ENCODE measurements at regions of chr2 and their contacts with region 1.

Region 1: DNA sequence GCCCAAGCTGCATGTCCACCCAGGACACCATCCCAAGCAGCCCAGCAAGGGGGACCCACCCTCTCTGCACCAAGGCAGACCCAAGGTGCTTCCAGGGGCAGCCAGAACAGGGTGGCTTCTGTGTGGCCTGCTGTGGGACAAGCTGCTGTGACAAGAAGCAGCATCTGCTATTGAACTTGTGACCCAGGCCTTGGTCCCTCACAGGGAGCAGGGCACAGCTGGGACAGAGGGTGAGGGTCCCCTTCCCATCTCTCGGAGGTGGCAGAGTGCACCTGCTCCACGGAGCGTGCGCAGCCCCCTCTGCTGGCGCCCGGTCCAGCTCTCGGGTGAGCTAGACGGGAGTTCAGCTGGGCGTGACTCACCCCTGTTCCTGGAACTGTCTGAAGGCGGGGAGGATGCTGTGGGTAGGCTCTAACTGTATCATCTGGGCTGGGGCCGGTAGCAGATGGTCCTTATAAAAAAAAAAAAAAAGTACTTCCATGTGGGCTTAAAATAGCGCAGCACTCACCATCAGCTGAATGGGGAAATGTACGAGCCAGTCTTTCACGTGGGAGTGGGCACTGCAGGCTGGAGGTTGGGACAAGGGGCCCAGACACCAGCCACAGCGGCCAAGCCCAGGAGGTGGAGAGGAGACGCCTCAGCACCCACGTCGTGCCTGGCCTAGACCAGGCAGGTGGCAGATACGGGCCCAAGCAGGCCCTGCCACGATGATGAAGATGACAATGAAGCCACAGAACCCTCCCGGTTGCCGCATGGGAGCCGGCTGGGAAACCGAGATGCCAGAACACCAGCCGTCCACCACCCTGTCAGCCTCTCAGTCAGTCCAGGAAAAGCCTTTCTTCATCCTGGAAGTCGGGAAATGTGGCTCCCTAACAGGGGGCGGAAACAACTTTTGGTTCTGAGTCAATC is 136.8 kb upstream of the ID2 start:
- DNase-seq: peak; percentile 40 to 92 (median 72)
- ATAC-seq: peak; percentile 87
- H3K4me3 ChIP-seq: no peak overlapping the region
- H3K4me3 Mint-ChIP-seq: peak overlapping the region; percentile 35
- H3K27ac ChIP-seq: peak overlapping the region in 1 of 2 donors; percentile 59
- H3K27ac Mint-ChIP-seq: peak overlapping the region; percentile 66
- H3K4me1 ChIP-seq: peaks cover 71% of the 10 kb centered on the region
- H3K4me1 Mint-ChIP-seq: peaks cover 48% of the 10 kb centered on the region
- H3K27me3 ChIP-seq: no peaks in the 10 kb centered on the region
- H3K27me3 Mint-ChIP-seq: no peaks in the 10 kb centered on the region
- CTCF ChIP-seq: peak; percentile 41

Region 2: DNA sequence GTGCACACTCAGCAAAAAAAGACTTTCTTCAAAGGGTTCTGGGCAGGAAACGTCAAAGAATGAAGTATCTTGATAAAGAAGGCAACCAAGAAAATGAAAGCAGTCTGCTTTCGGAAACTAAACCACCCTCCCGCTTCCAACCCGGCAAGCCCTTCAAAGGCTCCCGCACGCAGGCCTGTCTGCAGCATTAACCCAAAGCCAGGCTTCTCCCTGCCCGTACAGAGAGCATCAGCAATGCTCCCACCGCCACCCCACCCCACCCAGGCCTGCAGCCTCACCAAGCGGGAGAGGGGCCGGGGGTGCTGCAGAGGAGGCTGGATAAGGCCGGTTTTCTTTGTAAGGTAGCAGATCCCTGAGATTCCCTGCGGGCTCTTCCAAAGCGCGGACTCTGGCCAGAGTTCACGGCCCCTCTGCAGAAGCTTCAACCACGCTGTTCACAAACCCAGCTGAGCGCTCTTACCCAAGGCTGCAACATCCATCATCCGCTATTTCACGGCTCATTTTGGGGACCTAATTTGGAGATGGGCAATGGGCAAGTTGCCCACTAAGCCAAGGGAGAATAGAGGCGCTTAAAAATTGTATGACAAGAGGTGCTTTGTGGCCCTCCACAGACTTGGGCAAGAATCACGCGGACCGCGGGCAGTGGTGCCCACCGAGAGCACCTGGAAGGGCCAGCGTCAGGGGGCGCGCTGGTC is 88.7 kb before region 1 on chr2:
- CTCF ChIA-PET with region 1: no interaction called
- POLR2A ChIA-PET with region 1: no interaction called
- intact Hi-C with region 1: loop called in 1 of 2 experiments (anchors 10 kb)
- DNase-seq: peak in 12 of 14 experiments; percentile 20 to 83 (median 38)
- ATAC-seq: peak; percentile 67
- H3K4me3 ChIP-seq: peak overlapping the region; percentile 49
- H3K4me3 Mint-ChIP-seq: peak overlapping the region; percentile 89
- H3K27ac ChIP-seq: peak overlapping the region; percentile 64 to 72
- H3K27ac Mint-ChIP-seq: peak overlapping the region; percentile 68
- H3K4me1 ChIP-seq: peaks cover 41% of the 10 kb centered on the region
- H3K4me1 Mint-ChIP-seq: peaks cover 25% of the 10 kb centered on the region
- H3K27me3 ChIP-seq: no peaks in the 10 kb centered on the region
- H3K27me3 Mint-ChIP-seq: no peaks in the 10 kb centered on the region
- CTCF ChIP-seq: no peak

Region 3: DNA sequence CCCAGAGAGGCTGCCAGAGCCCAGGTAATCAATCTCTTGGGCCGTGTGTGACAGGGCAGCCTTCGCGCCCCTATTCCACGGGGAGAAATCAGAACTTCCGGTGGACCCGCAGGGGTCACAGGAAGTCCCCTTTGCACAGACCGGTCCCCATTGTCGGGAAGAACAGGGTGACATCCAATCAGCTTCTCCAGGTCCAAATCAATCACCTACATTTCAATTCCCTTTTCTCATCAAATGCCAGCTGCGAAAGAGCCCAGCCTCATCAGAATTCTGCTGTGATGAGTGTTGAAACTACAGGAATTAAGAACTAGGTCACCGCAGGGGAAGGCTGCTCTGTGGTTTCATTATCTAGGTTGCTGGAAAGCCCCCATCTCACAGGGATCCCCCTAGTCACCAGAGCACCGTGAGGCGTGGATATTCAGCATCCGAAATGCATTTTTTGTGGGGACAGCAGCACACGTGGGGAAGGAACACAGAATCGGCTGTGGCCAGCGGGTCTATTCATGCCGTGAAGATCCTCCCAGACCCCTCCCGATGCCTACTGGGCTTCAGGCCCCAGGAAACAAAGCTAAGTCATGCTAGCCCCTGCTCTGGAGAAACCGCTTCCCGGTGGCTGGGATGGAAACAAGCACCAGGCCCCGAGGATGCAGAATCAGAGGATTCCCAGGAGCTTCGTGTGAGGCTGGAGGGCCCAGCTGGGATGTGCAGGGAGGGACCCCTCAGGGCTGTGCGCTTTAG is 56.9 kb before region 1 on chr2:
- CTCF ChIA-PET with region 1: interaction called, 12 read pairs
- POLR2A ChIA-PET with region 1: interaction called, 9 read pairs
- intact Hi-C with region 1: no loop called
- DNase-seq: peak in 13 of 14 experiments; percentile 19 to 94 (median 45)
- ATAC-seq: peak; percentile 85
- H3K4me3 ChIP-seq: peak overlapping the region; percentile 60
- H3K4me3 Mint-ChIP-seq: peak overlapping the region; percentile 77
- H3K27ac ChIP-seq: peak overlapping the region; percentile 80
- H3K27ac Mint-ChIP-seq: peak overlapping the region; percentile 89
- H3K4me1 ChIP-seq: peaks cover 54% of the 10 kb centered on the region
- H3K4me1 Mint-ChIP-seq: peaks cover 58% of the 10 kb centered on the region
- H3K27me3 ChIP-seq: no peaks in the 10 kb centered on the region
- H3K27me3 Mint-ChIP-seq: no peaks in the 10 kb centered on the region
- CTCF ChIP-seq: no peak

Region 4: DNA sequence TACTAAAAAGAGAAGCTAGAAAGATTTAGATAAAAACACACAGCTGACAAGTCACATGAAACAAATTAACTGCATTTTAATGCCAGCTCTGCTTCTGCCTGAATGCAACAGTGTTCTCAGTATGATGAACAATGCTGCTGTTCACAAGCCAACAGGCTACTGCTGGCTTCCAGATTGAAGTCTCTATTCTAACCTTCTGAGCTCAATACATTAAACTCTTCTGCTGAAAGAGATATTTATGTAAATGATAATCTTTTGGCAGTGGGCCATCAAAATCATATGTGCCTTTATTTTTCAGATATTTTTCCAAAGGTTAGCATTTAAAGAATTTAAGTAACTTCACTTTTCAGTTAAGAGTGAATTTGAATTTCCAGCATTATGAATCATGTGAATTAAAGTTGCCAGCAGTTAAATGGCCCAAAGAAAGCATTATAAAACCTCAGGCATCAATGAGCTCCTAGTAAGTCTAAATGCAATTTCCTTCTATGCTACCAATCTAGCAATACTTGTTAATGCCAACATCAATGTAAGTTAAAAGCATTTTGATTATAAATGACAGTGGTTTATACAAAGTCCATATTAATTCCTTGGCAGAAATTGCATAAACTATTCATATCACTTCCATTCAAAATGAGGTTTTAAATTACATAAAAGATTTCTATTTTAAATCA is 209.2 kb after region 1 on chr2:
- CTCF ChIA-PET with region 1: no interaction called
- POLR2A ChIA-PET with region 1: no interaction called
- intact Hi-C with region 1: no loop called
- DNase-seq: no peak
- ATAC-seq: no peak
- H3K4me3 ChIP-seq: no peak overlapping the region
- H3K4me3 Mint-ChIP-seq: no peak overlapping the region
- H3K27ac ChIP-seq: no peak overlapping the region
- H3K27ac Mint-ChIP-seq: no peak overlapping the region
- H3K4me1 ChIP-seq: no peaks in the 10 kb centered on the region
- H3K4me1 Mint-ChIP-seq: no peaks in the 10 kb centered on the region
- H3K27me3 ChIP-seq: no peaks in the 10 kb centered on the region
- H3K27me3 Mint-ChIP-seq: no peaks in the 10 kb centered on the region
- CTCF ChIP-seq: no peak

Measured in CD4-positive, alpha-beta T cell (primary cell).